ENCODE measurements at regions of chr9 and their contacts with region 1.

Region 1: DNA sequence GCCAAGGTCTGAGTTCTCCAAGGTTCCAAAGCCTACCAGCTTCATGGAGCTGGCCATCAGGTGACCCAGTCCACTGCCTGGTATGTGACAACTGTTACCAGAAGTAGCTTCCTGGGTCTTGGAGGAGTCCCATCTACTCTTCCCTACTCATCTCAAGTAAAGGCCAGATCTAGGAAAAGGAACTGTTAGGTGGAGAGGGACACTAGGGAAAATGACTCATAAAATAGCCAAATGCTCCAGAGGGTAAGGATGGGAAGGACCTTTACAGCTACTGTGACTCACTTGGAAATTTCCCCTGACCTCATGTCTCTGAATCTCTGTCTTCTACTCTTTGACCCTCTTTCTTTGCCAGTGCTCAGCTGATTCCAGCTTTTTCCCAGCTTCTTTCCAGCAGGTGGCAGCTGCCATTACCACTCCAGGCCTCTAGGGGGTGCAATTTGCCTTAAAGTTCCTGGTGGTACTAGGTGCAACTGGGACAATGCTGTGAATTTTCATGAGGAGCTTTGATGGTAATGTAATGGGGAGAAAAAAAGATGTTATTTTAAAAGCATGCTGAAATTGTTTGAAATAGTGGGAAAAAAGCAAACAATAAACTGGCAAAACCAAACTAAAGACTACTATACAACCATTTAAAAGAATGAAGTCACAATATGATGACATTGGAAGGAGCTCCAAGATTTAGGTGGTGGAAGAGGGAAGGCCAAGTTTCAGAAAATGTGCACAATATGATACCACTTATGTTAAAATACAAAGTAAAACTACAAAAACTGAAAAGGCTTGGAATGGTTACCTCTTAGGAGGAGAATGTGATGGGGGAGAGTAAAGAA is 27.1 kb upstream of the MYORG start:
- DNase-seq: peak; percentile 24
- H3K4me3 ChIP-seq: no peak overlapping the region
- H3K27ac ChIP-seq: no peak overlapping the region
- H3K27me3 ChIP-seq: no peaks in the 10 kb centered on the region
- CTCF ChIP-seq: peak; percentile 99

Region 2: DNA sequence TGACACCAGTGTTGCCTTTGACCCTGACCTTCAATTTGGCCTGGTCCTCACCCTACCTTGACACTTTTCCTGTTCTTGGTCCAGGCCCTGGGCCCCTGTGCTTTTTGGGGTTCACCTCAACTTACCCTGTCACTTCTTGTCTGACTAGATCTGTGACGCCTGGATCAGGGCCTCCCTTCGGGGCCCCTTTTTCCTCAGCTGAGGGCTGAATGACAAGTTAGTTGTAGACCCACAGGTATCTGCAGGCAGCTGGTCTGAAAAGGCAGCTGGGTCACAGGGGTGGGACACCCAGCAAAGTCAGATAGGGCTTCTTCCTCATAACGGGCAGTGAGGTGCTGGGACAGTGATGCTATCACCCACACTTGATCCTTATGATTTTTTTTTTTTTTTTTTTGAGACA is 17.1 kb before region 1 on chr9:
- CTCF ChIA-PET with region 1: interaction called, 19 read pairs
- POLR2A ChIA-PET with region 1: no interaction called
- DNase-seq: no peak
- H3K4me3 ChIP-seq: no peak overlapping the region
- H3K27ac ChIP-seq: no peak overlapping the region
- H3K27me3 ChIP-seq: peaks cover 4% of the 10 kb centered on the region
- CTCF ChIP-seq: no peak

Region 3: DNA sequence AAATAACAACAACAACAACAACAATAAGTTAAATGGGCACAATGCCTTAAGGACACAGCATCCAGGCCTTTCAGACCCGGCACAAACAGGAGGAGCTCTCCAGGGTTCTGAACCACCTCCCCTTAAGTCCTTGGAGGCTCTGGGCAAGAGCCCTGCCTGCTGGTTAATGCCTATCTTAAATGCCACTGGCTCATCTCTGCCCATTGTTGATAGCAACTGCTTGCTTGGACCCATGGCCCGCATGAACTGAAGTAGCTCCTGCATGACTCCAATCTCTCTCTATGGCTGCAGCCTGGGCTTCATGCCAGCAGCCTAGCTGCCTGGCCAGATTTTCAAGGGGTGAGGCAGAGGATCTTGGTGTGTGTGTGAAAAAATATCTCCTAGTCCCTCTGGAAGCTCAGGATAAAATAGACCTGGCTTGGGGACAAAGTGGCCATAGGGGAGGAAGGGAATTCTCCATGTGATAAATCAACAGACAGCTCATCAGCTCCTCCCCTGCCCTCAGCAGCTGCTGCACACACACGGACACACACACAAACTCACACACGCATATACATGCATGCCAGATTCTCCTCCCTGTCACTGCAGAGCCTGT is 27.2 kb after region 1 on chr9:
- CTCF ChIA-PET with region 1: interaction called, 30 read pairs
- POLR2A ChIA-PET with region 1: interaction called, 5 read pairs
- DNase-seq: peak; percentile 60
- H3K4me3 ChIP-seq: no peak overlapping the region
- H3K27ac ChIP-seq: no peak overlapping the region
- H3K27me3 ChIP-seq: no peaks in the 10 kb centered on the region
- CTCF ChIP-seq: no peak

Region 4: GRCh38 chr9:34457266-34458012 is 53.7 kb after region 1 on chr9:
- CTCF ChIA-PET with region 1: interaction called, 12 read pairs
- POLR2A ChIA-PET with region 1: no interaction called
- DNase-seq: no peak
- H3K4me3 ChIP-seq: peak overlapping the region; percentile 85
- H3K27ac ChIP-seq: peak overlapping the region; percentile 68
- H3K27me3 ChIP-seq: peaks cover 9% of the 10 kb centered on the region
- CTCF ChIP-seq: no peak

Region 5: GRCh38 chr9:34500623-34501267 is 97.0 kb after region 1 on chr9:
- CTCF ChIA-PET with region 1: interaction called, 139 read pairs
- POLR2A ChIA-PET with region 1: interaction called, 3 read pairs
- DNase-seq: no peak
- H3K4me3 ChIP-seq: no peak overlapping the region
- H3K27ac ChIP-seq: no peak overlapping the region
- H3K27me3 ChIP-seq: peaks cover 48% of the 10 kb centered on the region
- CTCF ChIP-seq: peak; percentile 98

Region 6: GRCh38 chr9:34603610-34604231 is 200.0 kb after region 1 on chr9:
- CTCF ChIA-PET with region 1: interaction called, 48 read pairs
- POLR2A ChIA-PET with region 1: no interaction called
- DNase-seq: peak; percentile 29
- H3K4me3 ChIP-seq: no peak overlapping the region
- H3K27ac ChIP-seq: no peak overlapping the region
- H3K27me3 ChIP-seq: peaks cover 31% of the 10 kb centered on the region
- CTCF ChIP-seq: peak; percentile 95

Measured in AG04450 (cell line).